ENCODE measurements at regions of chr1 and their contacts with region 1.

Region 1: DNA sequence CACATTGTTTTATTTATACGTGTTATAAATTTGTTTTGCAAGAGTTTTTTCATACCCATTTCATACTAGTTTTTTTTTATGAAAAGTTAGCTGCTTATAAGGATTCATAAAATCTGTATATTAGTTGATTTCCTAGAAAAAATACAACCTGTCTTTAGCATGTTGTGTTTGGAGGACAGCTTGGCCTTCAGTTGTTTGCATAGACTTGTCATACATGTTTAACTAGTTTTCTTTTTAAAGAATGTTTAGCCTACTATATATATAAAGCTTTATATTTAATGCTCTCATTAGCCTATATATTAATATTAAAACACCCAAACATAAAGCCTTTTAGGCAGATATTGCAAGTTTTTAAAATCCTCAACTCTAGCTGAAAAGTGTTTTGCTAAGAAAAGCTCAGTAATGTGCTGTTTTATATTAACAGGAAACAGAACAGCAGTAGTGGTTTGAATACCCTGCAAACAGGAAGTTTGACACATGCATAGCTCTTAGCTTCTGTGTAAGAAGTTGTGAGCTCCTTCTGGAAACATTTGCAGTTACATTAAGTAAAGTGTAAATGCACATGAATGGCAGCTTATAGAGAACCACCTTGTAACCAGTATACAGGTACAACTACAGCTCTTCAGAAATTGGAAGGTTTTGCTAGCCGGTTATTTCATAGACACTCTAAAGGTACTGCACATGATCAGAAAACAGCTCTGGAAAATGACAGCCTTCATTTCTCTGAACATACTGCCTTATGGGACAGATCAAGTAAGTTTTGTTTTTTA is at the start of gene PRKACB:
- DNase-seq: no peak
- H3K4me3 Mint-ChIP-seq: peak within 1 kb of the TSS; percentile 48
- H3K27ac Mint-ChIP-seq: peak within 1 kb of the TSS; percentile 83
- H3K4me1 Mint-ChIP-seq: peaks cover 27% of the 10 kb centered on the region
- H3K27me3 Mint-ChIP-seq: no peaks in the 10 kb centered on the region
- CTCF ChIP-seq: no peak
- total RNA-seq, gene PRKACB: 28.5 and 30.3 TPM in 2 replicates

Region 2: GRCh38 chr1:84174051-84174556 is 30.1 kb after region 1 on chr1:
- CTCF ChIA-PET with region 1: no interaction called
- intact Hi-C with region 1: loop called (anchors 2 kb)
- DNase-seq: peak; percentile 29
- H3K4me3 Mint-ChIP-seq: peak overlapping the region; percentile 58
- H3K27ac Mint-ChIP-seq: peak overlapping the region; percentile 88
- H3K4me1 Mint-ChIP-seq: peaks cover 23% of the 10 kb centered on the region
- H3K27me3 Mint-ChIP-seq: no peaks in the 10 kb centered on the region
- CTCF ChIP-seq: no peak

Region 3: GRCh38 chr1:84236256-84236655 is 92.3 kb after region 1 on chr1:
- CTCF ChIA-PET with region 1: no interaction called
- intact Hi-C with region 1: no loop called
- DNase-seq: no peak
- H3K4me3 Mint-ChIP-seq: no peak overlapping the region
- H3K27ac Mint-ChIP-seq: no peak overlapping the region
- H3K4me1 Mint-ChIP-seq: no peaks in the 10 kb centered on the region
- H3K27me3 Mint-ChIP-seq: no peaks in the 10 kb centered on the region
- CTCF ChIP-seq: no peak

Region 4: DNA sequence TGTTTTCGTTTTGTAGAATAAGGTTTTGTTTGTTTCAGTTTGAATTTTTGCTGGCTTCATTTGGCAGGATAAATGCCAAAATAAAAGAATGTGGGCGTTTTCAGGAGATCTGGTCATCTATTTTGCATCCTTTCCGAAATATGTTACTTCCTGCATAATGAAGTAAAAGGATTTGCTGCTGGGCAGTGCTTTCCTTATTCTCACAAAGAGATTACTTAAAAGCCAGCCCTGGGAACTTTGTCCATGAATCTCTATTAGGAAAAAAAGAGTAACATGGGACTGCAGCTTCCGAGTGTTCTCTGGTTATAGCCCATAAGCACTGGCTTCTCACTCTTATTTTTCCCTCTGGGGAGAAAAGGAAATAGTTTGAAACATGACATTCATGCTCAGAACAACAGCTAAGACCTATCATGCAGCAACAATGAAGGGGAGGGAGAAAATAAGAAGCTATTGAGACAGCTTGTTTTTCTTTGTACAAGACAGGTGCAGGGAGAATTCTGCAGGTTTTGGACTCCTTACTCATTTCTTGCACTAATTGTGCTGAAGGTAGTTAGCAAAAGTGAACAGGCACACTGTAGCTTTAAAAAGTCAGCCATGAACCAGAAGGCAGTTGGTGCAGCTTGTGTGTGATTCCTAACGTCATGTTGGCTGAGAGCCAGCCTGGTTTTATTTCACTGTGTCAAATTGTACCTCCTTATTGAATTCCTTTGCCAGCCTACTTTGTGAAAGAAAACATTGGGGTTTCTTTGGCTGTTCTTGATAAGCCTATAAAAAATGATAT is 157.2 kb after region 1 on chr1 and contains the start of gene SAMD13:
- CTCF ChIA-PET with region 1: no interaction called
- intact Hi-C with region 1: loop called (anchors 2 kb)
- DNase-seq: peak; percentile 67
- H3K4me3 Mint-ChIP-seq: peak within 1 kb of the TSS; percentile 62
- H3K27ac Mint-ChIP-seq: peak within 1 kb of the TSS; percentile 79
- H3K4me1 Mint-ChIP-seq: peaks cover 46% of the 10 kb centered on the region
- H3K27me3 Mint-ChIP-seq: no peaks in the 10 kb centered on the region
- CTCF ChIP-seq: no peak
- total RNA-seq, gene SAMD13: 1.7 and 1.8 TPM in 2 replicates

Region 5: DNA sequence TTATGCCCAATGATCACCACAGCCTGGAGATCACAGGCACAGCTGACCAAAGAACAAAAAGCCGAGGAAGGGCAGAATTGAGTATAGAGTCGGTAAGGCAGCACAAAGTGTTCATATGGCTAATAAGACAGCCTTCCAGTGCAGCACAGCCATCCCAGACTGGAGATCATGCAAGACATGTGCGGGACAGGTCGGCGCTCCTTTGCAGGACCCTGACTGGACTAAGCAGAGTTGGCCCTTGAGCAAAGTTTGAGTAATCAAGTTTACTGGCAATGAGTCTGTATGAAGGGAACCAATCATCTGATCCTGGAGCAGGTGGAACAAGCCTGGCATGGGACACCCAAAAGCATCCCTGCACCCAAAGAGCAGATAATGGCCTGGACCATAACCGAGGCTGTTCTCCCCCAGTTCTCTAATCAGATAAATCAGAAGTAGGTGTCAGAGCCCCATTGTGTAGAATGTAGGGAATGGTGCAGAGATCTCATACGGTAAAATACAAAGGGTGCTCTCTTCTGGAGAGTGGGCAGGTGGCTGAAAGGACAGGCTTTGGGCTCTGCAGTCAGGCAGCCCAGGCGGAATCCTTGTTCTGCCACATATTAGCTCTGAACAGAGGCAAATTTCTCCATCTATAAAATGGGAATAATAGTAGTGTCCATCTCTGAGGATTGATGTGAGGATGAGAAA is 243.6 kb after region 1 on chr1:
- CTCF ChIA-PET with region 1: no interaction called
- intact Hi-C with region 1: loop called (anchors 5 kb)
- DNase-seq: no peak
- H3K4me3 Mint-ChIP-seq: no peak overlapping the region
- H3K27ac Mint-ChIP-seq: no peak overlapping the region
- H3K4me1 Mint-ChIP-seq: peaks cover 13% of the 10 kb centered on the region
- H3K27me3 Mint-ChIP-seq: no peaks in the 10 kb centered on the region
- CTCF ChIP-seq: no peak

Region 6: DNA sequence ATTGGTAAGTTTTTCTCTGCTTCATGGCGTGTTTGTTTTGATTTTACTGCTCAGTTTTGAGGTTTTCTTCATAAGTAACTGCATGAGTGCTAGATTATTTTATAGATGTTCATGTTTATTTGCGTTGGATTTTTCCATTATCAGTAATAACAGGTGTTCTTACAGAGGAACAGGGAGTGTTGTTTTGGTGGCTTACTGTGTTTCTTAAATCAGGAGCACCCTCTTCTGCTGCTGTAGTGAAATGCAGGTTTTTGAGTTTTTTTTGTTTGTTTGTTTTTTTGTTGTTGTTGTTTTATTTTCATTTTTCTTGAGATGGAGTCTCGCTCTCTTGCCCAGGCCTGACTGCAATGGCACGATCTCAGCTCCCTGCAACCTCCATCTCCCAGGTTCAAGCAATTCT is 397.7 kb after region 1 on chr1:
- CTCF ChIA-PET with region 1: no interaction called
- intact Hi-C with region 1: loop called (anchors 5 kb)
- DNase-seq: no peak
- H3K4me3 Mint-ChIP-seq: no peak overlapping the region
- H3K27ac Mint-ChIP-seq: no peak overlapping the region
- H3K4me1 Mint-ChIP-seq: no peaks in the 10 kb centered on the region
- H3K27me3 Mint-ChIP-seq: no peaks in the 10 kb centered on the region
- CTCF ChIP-seq: no peak

Region 7: DNA sequence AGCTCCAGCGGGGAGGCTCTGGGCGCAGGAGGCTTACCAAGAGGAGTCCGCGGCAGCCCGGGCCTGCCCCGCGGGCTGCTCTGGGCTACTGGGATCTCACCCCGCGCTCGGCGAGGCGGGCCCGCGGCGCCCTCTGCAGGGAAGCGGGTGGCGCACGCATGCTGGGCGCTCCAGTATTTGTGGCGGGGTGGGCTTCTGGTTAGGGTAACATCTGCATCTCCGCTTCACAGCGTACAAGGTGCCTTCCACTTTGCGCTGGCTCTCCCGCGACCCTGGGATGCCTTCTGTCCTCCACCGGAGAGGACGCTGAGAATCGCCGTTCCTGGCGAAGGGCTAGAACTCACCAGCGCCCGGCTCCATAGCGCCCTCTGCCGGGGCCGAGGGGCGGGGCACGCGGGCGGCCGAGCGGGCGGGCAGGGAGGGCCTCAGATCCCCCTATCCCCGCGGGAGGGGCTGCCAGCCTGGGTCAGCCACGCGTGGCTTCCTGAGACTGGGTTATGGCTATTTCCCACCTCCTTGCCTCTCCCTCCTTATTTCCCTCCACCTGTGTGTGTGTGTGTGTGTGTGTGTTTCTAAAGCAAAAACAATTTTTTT is 476.8 kb after region 1 on chr1:
- CTCF ChIA-PET with region 1: interaction called, 4 read pairs
- intact Hi-C with region 1: loop called (anchors 2 kb)
- DNase-seq: peak; percentile 90
- H3K4me3 Mint-ChIP-seq: peak overlapping the region; percentile 75
- H3K27ac Mint-ChIP-seq: peak overlapping the region; percentile 32
- H3K4me1 Mint-ChIP-seq: peaks cover 14% of the 10 kb centered on the region
- H3K27me3 Mint-ChIP-seq: no peaks in the 10 kb centered on the region
- CTCF ChIP-seq: peak; percentile 97

Region 8: GRCh38 chr1:84772428-84772943 is 628.5 kb after region 1 on chr1:
- CTCF ChIA-PET with region 1: no interaction called
- intact Hi-C with region 1: loop called (anchors 5 kb)
- DNase-seq: peak; percentile 89
- H3K4me3 Mint-ChIP-seq: no peak overlapping the region
- H3K27ac Mint-ChIP-seq: no peak overlapping the region
- H3K4me1 Mint-ChIP-seq: peaks cover 8% of the 10 kb centered on the region
- H3K27me3 Mint-ChIP-seq: peaks cover 30% of the 10 kb centered on the region
- CTCF ChIP-seq: peak; percentile 86